CD8-positive, alpha-beta T cell (primary cell): ENCODE measurements at regions of chr1 and their contacts with region 1.

Region 1: GRCh38 chr1:147640553-147641165 is 29.7 kb downstream of the ACP6 start:
- DNase-seq: peak; percentile 52 to 90 (median 77)
- ATAC-seq: peak; percentile 100
- H3K4me3 ChIP-seq: no peak overlapping the region
- H3K4me3 Mint-ChIP-seq: no peak overlapping the region
- H3K27ac ChIP-seq: no peak overlapping the region
- H3K27ac Mint-ChIP-seq: no peak overlapping the region
- H3K4me1 ChIP-seq: peaks cover 7% of the 10 kb centered on the region
- H3K4me1 Mint-ChIP-seq: peaks cover 20% of the 10 kb centered on the region
- H3K27me3 ChIP-seq: no peaks in the 10 kb centered on the region
- H3K27me3 Mint-ChIP-seq: no peaks in the 10 kb centered on the region
- CTCF ChIP-seq: peak; percentile 72

Region 2: DNA sequence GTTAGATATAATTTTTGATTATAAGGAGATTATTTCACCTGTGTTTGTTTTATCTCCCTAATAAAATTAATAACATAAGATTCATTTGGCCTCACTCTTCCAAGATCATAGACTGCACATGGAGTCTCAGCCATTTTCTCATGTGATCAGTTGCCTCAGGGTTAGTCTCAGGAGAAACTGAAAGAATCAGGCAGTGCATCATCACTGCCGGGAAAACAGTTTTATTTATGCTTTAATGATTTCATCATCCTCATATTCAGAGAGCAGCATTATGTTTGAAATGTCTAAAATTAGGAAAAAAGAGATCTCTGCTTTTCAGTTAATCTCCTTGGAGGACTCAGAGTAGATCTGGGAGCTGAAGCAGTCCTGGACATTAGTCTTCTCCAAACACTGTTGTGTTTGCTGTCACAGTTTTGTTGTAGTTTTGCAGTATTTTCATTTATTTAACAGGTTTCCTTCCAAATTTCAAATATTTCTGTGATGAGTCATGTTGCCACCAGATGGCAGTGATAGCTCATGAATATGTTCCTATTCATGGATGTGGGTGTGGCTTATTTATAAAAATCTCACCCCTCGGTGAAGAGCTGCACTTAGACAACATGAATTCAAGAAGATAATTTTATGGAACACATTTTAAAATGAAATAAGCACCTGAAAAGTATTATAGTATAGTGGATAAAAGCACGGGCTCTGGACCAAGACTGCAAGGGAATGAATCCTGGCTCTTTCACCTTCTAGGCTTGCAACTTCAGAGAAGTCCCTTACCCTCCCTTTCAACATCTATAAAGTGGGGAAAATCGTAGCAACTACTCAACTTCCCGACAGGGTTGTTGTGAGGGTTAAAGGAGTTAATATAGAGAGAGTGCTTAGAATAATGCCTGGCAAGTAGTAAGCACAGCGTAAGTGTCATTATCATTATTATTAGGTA is 367.0 kb before region 1 on chr1:
- CTCF ChIA-PET with region 1: no interaction called
- POLR2A ChIA-PET with region 1: no interaction called
- intact Hi-C with region 1: loop called (anchors 5 kb)
- DNase-seq: peak in 5 of 9 experiments; percentile 1 to 65 (median 15)
- ATAC-seq: peak; percentile 66
- H3K4me3 ChIP-seq: no peak overlapping the region
- H3K4me3 Mint-ChIP-seq: no peak overlapping the region
- H3K27ac ChIP-seq: no peak overlapping the region
- H3K27ac Mint-ChIP-seq: no peak overlapping the region
- H3K4me1 ChIP-seq: no peaks in the 10 kb centered on the region
- H3K4me1 Mint-ChIP-seq: peaks cover 4% of the 10 kb centered on the region
- H3K27me3 ChIP-seq: no peaks in the 10 kb centered on the region
- H3K27me3 Mint-ChIP-seq: no peaks in the 10 kb centered on the region
- CTCF ChIP-seq: peak; percentile 67

Region 3: DNA sequence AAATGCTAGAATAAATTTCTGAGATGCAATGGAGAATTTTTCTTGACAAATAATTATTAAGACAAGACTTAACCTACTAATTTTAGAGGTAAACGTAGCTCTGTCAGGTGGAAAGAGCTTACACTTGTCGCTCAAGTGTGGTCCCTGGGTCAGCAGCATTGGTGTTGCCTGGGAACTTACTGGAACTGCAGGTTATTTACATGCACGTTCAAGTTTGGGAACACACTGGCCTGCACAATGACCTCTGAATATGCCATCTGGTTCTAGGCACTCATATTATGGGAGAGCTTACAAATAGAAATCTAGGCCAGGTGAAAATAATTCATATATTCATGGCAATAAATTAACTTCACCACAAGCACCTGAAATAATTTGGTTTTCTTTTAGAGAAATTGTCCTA is 187.8 kb before region 1 on chr1:
- CTCF ChIA-PET with region 1: no interaction called
- POLR2A ChIA-PET with region 1: no interaction called
- intact Hi-C with region 1: no loop called
- DNase-seq: no peak
- ATAC-seq: no peak
- H3K4me3 ChIP-seq: no peak overlapping the region
- H3K4me3 Mint-ChIP-seq: no peak overlapping the region
- H3K27ac ChIP-seq: no peak overlapping the region
- H3K27ac Mint-ChIP-seq: no peak overlapping the region
- H3K4me1 ChIP-seq: no peaks in the 10 kb centered on the region
- H3K4me1 Mint-ChIP-seq: no peaks in the 10 kb centered on the region
- H3K27me3 ChIP-seq: no peaks in the 10 kb centered on the region
- H3K27me3 Mint-ChIP-seq: peaks cover 24% of the 10 kb centered on the region
- CTCF ChIP-seq: no peak

Region 4: GRCh38 chr1:147509786-147510395 is 130.8 kb before region 1 on chr1:
- CTCF ChIA-PET with region 1: interaction called, 53 read pairs
- POLR2A ChIA-PET with region 1: no interaction called
- intact Hi-C with region 1: loop called (anchors 1 to 5 kb)
- DNase-seq: no peak
- ATAC-seq: no peak
- H3K4me3 ChIP-seq: no peak overlapping the region
- H3K4me3 Mint-ChIP-seq: no peak overlapping the region
- H3K27ac ChIP-seq: no peak overlapping the region
- H3K27ac Mint-ChIP-seq: no peak overlapping the region
- H3K4me1 ChIP-seq: no peaks in the 10 kb centered on the region
- H3K4me1 Mint-ChIP-seq: no peaks in the 10 kb centered on the region
- H3K27me3 ChIP-seq: no peaks in the 10 kb centered on the region
- H3K27me3 Mint-ChIP-seq: peaks cover 5% of the 10 kb centered on the region
- CTCF ChIP-seq: no peak

Region 5: GRCh38 chr1:147599362-147600118 is 41.1 kb before region 1 on chr1:
- CTCF ChIA-PET with region 1: no interaction called
- POLR2A ChIA-PET with region 1: no interaction called
- intact Hi-C with region 1: loop called in 1 of 2 experiments (anchors 5 kb)
- DNase-seq: peak; percentile 94 to 98 (median 96)
- ATAC-seq: peak; percentile 84
- H3K4me3 ChIP-seq: peak overlapping the region; percentile 75 to 77
- H3K4me3 Mint-ChIP-seq: peak overlapping the region; percentile 88
- H3K27ac ChIP-seq: peak overlapping the region; percentile 24 to 52
- H3K27ac Mint-ChIP-seq: peak overlapping the region; percentile 72
- H3K4me1 ChIP-seq: peaks cover 15% of the 10 kb centered on the region
- H3K4me1 Mint-ChIP-seq: peaks cover 27% of the 10 kb centered on the region
- H3K27me3 ChIP-seq: no peaks in the 10 kb centered on the region
- H3K27me3 Mint-ChIP-seq: no peaks in the 10 kb centered on the region
- CTCF ChIP-seq: no peak

Region 6: DNA sequence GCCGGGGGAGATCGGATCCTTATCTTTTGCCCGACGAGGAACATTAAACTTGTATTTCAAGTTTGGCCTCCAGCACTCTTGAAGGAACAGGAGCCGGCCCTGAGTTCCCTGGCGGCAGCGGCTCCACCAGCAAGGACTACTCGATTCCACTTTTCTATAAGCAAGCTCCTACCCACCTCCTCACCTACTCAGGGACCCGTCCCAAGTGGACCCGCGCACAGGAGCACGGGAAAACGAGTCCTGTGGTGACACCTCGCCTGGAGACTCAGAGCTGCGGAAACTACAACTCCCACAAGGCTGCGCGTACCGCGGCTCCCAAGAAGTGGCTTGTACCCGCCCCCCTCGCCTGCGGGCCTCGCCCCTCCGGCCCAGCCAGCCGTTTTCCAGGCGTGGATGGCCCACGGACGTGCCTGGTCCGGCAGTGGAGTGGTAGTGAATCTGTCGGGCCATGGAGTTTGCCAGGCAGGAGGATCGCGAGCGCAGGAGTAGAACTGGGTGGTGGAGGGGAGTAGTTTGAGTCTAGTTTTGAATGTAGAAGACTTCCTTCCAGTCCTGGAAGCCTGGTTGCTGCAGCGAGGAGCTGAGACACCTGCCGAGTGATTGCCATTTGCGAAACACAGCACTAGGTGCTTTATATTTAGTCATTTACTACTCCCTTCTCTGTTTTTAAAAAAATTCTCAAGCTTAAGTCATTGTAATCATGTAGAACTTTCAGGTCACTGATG is 29.8 kb after region 1 on chr1 and contains the start of gene ACP6:
- CTCF ChIA-PET with region 1: interaction called, 9 read pairs
- POLR2A ChIA-PET with region 1: no interaction called
- intact Hi-C with region 1: loop called in 1 of 2 experiments (anchors 2 kb)
- DNase-seq: peak; percentile 58 to 92 (median 85)
- ATAC-seq: peak; percentile 94
- H3K4me3 ChIP-seq: peak within 1 kb of the TSS; percentile 84 to 94
- H3K4me3 Mint-ChIP-seq: peak within 1 kb of the TSS; percentile 94
- H3K27ac ChIP-seq: peak within 1 kb of the TSS; percentile 53 to 57
- H3K27ac Mint-ChIP-seq: peak within 1 kb of the TSS; percentile 90
- H3K4me1 ChIP-seq: peaks cover 9% of the 10 kb centered on the region
- H3K4me1 Mint-ChIP-seq: peaks cover 30% of the 10 kb centered on the region
- H3K27me3 ChIP-seq: no peaks in the 10 kb centered on the region
- H3K27me3 Mint-ChIP-seq: no peaks in the 10 kb centered on the region
- CTCF ChIP-seq: no peak
- total RNA-seq, gene ACP6: 4.4 to 4.9 TPM

Region 7: GRCh38 chr1:147890177-147890790 is 249.6 kb after region 1 on chr1:
- CTCF ChIA-PET with region 1: interaction called, 40 read pairs
- POLR2A ChIA-PET with region 1: no interaction called
- intact Hi-C with region 1: loop called (anchors 2 kb)
- DNase-seq: peak; percentile 16 to 74 (median 58)
- ATAC-seq: peak; percentile 48
- H3K4me3 ChIP-seq: no peak overlapping the region
- H3K4me3 Mint-ChIP-seq: no peak overlapping the region
- H3K27ac ChIP-seq: no peak overlapping the region
- H3K27ac Mint-ChIP-seq: no peak overlapping the region
- H3K4me1 ChIP-seq: no peaks in the 10 kb centered on the region
- H3K4me1 Mint-ChIP-seq: no peaks in the 10 kb centered on the region
- H3K27me3 ChIP-seq: no peaks in the 10 kb centered on the region
- H3K27me3 Mint-ChIP-seq: peaks cover 2% of the 10 kb centered on the region
- CTCF ChIP-seq: peak; percentile 41